GM12878 (cell line): ENCODE measurements at regions of chr16 and their contacts with region 1.

Region 1: GRCh38 chr16:75043175-75043895 is 44.5 kb downstream of the ZNRF1 start:
- DNase-seq: peak; percentile 59
- ATAC-seq: peak; percentile 93
- H3K4me3 ChIP-seq: no peak overlapping the region; the same call in 1 of the 2 replicates
- H3K27ac ChIP-seq: 0 out of 2 replicates have a peak overlapping the region, but pooled peaks have one; percentile 5
- H3K4me1 ChIP-seq: peaks cover 27% of the 10 kb centered on the region
- H3K27me3 ChIP-seq: no peaks in the 10 kb centered on the region
- CTCF ChIP-seq: no peak
- EP300 ChIP-seq: no peak
- POLR2A ChIP-seq: no peak
- RAD21 ChIP-seq: no peak

Region 2: DNA sequence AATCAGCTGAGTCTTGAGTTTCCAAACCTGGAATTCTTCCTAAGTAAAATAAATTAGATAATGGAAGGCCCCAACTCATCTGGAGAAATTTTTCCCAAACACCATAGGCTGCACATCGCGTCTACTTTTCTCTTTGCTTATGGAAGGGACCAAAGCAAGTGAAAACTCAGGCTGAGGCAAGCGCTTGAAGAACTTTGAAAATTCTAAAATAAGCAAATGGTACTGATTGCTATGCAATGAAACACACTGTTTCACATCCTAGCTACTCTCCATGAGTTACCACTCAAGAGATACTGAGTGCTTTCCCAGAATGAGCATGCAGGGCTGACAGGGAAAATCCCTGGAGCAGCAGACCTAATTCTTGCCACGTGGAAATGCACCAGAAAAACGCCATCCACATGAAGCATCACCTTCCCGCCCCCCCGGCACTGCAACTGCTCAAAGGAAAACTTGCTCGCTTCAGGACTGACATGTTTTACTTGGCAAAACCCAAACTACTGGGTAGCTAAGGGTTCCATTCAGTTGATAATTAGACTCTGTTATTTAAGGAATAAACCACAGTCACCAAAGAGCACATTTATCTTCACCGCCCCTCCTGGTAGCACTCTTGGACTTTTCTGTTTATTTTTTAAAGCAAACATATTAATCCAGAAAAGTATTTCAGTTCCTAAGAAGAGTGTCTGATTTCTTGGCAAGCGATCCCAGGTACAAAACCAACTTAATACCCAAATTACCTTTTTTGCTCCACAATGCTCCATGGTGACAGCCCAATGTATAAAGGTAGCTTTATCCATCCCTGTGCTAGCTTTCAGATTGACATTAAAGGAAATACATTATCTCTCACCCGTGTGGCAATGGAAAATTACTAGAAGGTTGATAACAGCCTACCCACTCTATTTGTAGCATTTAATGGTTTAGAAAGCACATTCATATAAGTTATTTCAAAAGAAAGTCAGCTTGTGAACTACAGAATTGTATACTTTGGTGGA is 120.9 kb before region 1 on chr16:
- CTCF ChIA-PET with region 1: no interaction called
- POLR2A ChIA-PET with region 1: no interaction called
- RAD21 ChIA-PET with region 1: no interaction called
- SMC1A ChIA-PET with region 1: no interaction called
- in situ Hi-C with region 1: no loop called
- intact Hi-C with region 1: no loop called
- DNase-seq: no peak
- ATAC-seq: no peak
- H3K4me3 ChIP-seq: no peak overlapping the region
- H3K27ac ChIP-seq: no peak overlapping the region
- H3K4me1 ChIP-seq: no peaks in the 10 kb centered on the region
- H3K27me3 ChIP-seq: no peaks in the 10 kb centered on the region
- CTCF ChIP-seq: no peak
- EP300 ChIP-seq: no peak
- POLR2A ChIP-seq: no peak
- RAD21 ChIP-seq: no peak

Region 3: GRCh38 chr16:75019007-75019406 is 24.3 kb before region 1 on chr16:
- CTCF ChIA-PET with region 1: no interaction called
- POLR2A ChIA-PET with region 1: interaction called, 4 read pairs
- RAD21 ChIA-PET with region 1: interaction called, 5 read pairs
- SMC1A ChIA-PET with region 1: interaction called, 10 read pairs
- in situ Hi-C with region 1: no loop called
- intact Hi-C with region 1: no loop called
- DNase-seq: no peak
- ATAC-seq: peak; percentile 86
- H3K4me3 ChIP-seq: no peak overlapping the region
- H3K27ac ChIP-seq: no peak overlapping the region
- H3K4me1 ChIP-seq: peaks cover 20% of the 10 kb centered on the region
- H3K27me3 ChIP-seq: no peaks in the 10 kb centered on the region
- CTCF ChIP-seq: no peak
- EP300 ChIP-seq: no peak; a peak in 1 of 4 replicates
- POLR2A ChIP-seq: no peak
- RAD21 ChIP-seq: no peak